CD4-positive, alpha-beta memory T cell (primary cell): ENCODE measurements at regions of chr14 and their contacts with region 1.

Region 1: GRCh38 chr14:53331247-53331646 is 178.1 kb upstream of the DDHD1 start:
- DNase-seq: no peak
- H3K4me3 ChIP-seq: no peak overlapping the region
- H3K4me3 Mint-ChIP-seq: no peak overlapping the region
- H3K27ac ChIP-seq: no peak overlapping the region
- H3K27ac Mint-ChIP-seq: no peak overlapping the region
- H3K4me1 ChIP-seq: no peaks in the 10 kb centered on the region
- H3K4me1 Mint-ChIP-seq: no peaks in the 10 kb centered on the region
- H3K27me3 ChIP-seq: no peaks in the 10 kb centered on the region
- H3K27me3 Mint-ChIP-seq: no peaks in the 10 kb centered on the region

Region 2: GRCh38 chr14:53285805-53286204 is 45.4 kb before region 1 on chr14:
- CTCF ChIA-PET with region 1: no interaction called
- POLR2A ChIA-PET with region 1: no interaction called
- intact Hi-C with region 1: loop called (anchors 10 kb)
- DNase-seq: no peak
- H3K4me3 ChIP-seq: no peak overlapping the region
- H3K4me3 Mint-ChIP-seq: no peak overlapping the region
- H3K27ac ChIP-seq: no peak overlapping the region
- H3K27ac Mint-ChIP-seq: no peak overlapping the region
- H3K4me1 ChIP-seq: no peaks in the 10 kb centered on the region
- H3K4me1 Mint-ChIP-seq: no peaks in the 10 kb centered on the region
- H3K27me3 ChIP-seq: no peaks in the 10 kb centered on the region
- H3K27me3 Mint-ChIP-seq: no peaks in the 10 kb centered on the region